Brain microvascular endothelial cell (primary cell): ENCODE measurements at regions of chr11 and their contacts with region 1.

Region 1: GRCh38 chr11:36265793-36266628 is 23.2 kb downstream of the COMMD9 start:
- DNase-seq: peak; percentile 28
- H3K4me3 ChIP-seq: no peak overlapping the region
- H3K27ac ChIP-seq: no peak overlapping the region
- H3K27me3 ChIP-seq: no peaks in the 10 kb centered on the region
- CTCF ChIP-seq: peak; percentile 92

Region 2: DNA sequence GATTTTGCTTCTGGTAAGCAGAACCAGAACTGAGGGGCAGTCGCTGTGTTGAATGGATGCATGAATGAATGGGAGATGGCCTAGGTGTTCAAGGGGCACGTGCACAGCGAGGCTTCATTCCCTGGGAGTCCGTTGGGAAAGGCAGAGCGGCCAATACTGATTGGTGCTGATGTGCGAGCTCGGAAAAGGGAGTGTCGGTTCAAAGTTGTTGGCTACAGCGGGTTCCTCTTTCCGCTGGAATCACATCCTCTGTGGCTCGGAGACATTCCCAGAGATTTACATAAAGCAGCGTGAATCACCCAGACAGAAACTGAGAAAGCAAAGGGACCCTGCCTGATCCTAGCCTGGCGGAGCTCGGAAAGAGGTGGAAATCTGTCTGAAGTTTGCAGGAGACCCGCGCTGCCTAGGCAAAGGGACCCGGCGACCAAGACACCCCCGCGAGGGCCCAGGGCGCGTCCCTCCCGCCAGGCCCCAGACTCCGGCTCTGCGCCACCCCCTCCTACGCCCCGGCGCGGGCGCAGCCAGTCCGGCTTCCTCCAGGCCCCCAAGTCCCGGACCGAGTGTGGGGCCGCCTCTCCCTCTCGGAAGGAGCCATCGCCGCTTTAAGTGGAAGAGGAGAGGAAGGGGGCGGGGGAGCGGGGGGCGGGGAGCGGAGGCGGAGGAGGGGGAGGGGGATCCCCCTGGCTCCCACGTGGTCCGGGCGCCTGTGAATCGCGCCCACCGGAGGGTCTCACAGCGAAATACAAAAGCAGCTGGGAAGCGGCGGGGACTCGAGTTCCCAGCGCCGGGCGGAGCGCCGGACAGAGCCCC is 648.1 kb before region 1 on chr11 and contains the start of gene FJX1:
- in situ Hi-C with region 1: loop called (anchors 25 kb)
- DNase-seq: peak; percentile 90
- H3K4me3 ChIP-seq: peak within 1 kb of the TSS; percentile 81
- H3K27ac ChIP-seq: peak within 1 kb of the TSS; percentile 87
- H3K27me3 ChIP-seq: no peaks in the 10 kb centered on the region
- CTCF ChIP-seq: no peak

Region 3: GRCh38 chr11:36105743-36106581 is 160.0 kb before region 1 on chr11:
- in situ Hi-C with region 1: no loop called
- DNase-seq: no peak
- H3K4me3 ChIP-seq: no peak overlapping the region
- H3K27ac ChIP-seq: no peak overlapping the region
- H3K27me3 ChIP-seq: no peaks in the 10 kb centered on the region
- CTCF ChIP-seq: no peak